Endothelial cell of umbilical vein (primary cell): ENCODE measurements at regions of chr7 and their contacts with region 1.

Region 1: GRCh38 chr7:32164346-32164957 is 94.2 kb upstream of the PDE1C start:
- DNase-seq: peak; percentile 70
- H3K4me3 ChIP-seq: no peak overlapping the region
- H3K27ac ChIP-seq: no peak overlapping the region
- H3K4me1 ChIP-seq: peaks cover 26% of the 10 kb centered on the region
- H3K27me3 ChIP-seq: no peaks in the 10 kb centered on the region
- CTCF ChIP-seq: peak; percentile 43 to 49
- POLR2A ChIP-seq: no peak

Region 2: GRCh38 chr7:31776616-31777015 is 387.8 kb before region 1 on chr7:
- CTCF ChIA-PET with region 1: interaction called, 58 read pairs
- POLR2A ChIA-PET with region 1: no interaction called
- dilution Hi-C with region 1: no loop called
- intact Hi-C with region 1: loop called (anchors 1 kb)
- DNase-seq: peak; percentile 55
- H3K4me3 ChIP-seq: no peak overlapping the region
- H3K27ac ChIP-seq: no peak overlapping the region
- H3K4me1 ChIP-seq: peaks cover 11% of the 10 kb centered on the region
- H3K27me3 ChIP-seq: no peaks in the 10 kb centered on the region
- CTCF ChIP-seq: no peak
- POLR2A ChIP-seq: no peak

Region 3: DNA sequence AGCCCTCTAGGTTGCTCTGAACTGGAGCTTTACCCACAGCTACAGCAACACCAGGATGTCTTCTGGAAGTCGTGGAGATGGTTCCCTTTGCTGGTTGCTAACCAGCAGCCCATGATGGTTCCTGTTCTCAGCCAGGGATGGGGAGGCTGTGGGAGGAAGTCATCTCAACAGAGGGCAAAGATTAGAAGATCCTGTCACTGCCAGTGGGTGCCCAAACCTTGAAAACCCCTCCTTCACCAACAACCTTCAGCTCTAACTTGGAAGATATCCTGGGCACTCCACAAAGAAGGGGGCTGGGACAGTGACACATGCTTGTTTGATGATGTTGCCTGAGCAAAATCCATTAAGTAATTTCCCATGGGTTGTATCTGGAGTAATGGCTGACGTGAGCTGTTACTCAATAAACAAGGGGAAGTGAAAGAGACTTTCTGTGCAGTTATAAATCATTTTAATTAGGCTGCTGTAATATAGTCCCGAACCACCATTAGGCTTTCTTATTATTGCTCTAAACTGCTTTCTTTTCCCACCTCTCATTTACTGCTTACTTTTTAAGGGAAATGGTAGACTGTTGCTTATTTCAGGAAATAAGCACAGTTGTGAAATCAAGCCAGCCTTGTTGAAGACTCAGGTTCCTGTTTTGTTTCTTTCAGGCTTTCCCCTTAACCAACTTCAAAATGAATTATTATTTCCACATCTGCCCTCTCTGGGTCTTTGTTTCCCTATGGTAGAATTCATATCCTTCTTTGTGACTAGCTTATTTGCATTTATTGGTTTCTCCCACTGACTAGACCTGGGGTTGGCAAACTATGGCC is 352.6 kb before region 1 on chr7:
- CTCF ChIA-PET with region 1: interaction called, 88 read pairs
- POLR2A ChIA-PET with region 1: no interaction called
- dilution Hi-C with region 1: no loop called
- intact Hi-C with region 1: loop called (anchors 1 kb)
- DNase-seq: peak; percentile 56
- H3K4me3 ChIP-seq: no peak overlapping the region
- H3K27ac ChIP-seq: no peak overlapping the region
- H3K4me1 ChIP-seq: peaks cover 26% of the 10 kb centered on the region
- H3K27me3 ChIP-seq: no peaks in the 10 kb centered on the region
- CTCF ChIP-seq: no peak
- POLR2A ChIP-seq: no peak

Region 4: DNA sequence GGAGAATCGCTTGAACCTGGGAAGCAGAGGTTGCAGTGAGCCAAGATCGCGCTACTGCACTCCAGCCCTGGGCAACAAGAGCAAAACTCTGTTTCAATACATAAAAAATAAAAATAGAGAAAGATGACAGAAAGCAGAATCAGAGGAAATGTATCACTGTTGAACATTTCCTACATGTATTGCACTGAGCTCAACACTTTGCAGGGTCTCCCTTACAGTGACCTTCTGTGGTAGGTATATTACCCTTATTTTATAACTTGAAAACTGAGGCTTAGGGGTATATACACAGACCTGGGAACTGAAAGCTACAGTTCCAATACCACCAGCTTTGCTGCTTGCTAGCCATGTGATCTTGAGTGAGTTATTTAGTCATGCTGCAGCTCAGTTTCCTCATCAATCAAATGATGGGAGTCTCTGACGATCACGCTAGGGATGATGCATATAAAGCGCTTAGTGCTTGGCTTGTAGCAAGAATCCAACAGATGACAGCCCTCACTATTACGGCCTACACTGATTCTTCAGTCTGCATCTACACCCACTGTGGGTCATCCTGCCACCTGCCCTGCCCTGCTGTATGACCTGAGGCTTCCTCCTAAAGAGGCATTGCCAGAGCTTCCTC is 193.3 kb before region 1 on chr7:
- CTCF ChIA-PET with region 1: no interaction called
- POLR2A ChIA-PET with region 1: no interaction called
- dilution Hi-C with region 1: no loop called
- intact Hi-C with region 1: loop called (anchors 5 kb)
- DNase-seq: no peak
- H3K4me3 ChIP-seq: no peak overlapping the region
- H3K27ac ChIP-seq: no peak overlapping the region
- H3K4me1 ChIP-seq: no peaks in the 10 kb centered on the region
- H3K27me3 ChIP-seq: no peaks in the 10 kb centered on the region
- CTCF ChIP-seq: no peak
- POLR2A ChIP-seq: no peak

Region 5: GRCh38 chr7:32070406-32071360 is 93.8 kb before region 1 on chr7 and contains the start of gene PDE1C:
- CTCF ChIA-PET with region 1: interaction called, 14 read pairs
- POLR2A ChIA-PET with region 1: no interaction called
- dilution Hi-C with region 1: no loop called
- intact Hi-C with region 1: no loop called
- DNase-seq: no peak
- H3K4me3 ChIP-seq: peak within 1 kb of the TSS; percentile 27 to 78 (median 42)
- H3K27ac ChIP-seq: no peak within 1 kb of the TSS
- H3K4me1 ChIP-seq: no peaks in the 10 kb centered on the region
- H3K27me3 ChIP-seq: peaks cover 20 to 63% of the 10 kb centered on the region in 2 experiments
- CTCF ChIP-seq: no peak
- POLR2A ChIP-seq: no peak
- total RNA-seq, gene PDE1C: 2.9 and 3.1 TPM in 2 replicates